ENCODE measurements at regions of chr10 and their contacts with region 1.

Region 1: DNA sequence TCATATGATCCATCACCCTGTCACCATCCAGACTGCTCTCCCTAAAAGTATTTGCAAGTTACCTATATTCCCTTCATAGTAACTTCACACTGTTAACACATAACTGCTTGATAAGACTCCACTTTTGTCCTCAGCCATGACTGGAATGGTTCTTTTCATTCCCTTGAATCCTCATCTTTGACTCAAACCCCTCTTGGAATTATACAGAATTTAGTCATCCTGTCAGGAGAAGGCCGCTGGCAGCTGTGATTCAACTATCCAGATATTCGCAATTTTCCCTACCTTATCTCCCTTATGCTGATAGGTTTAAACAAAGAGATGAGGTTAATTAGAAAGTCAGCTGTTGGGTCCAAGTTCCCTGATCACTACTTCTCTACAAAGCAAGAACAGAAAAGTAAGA is 143.0 kb upstream of the HPS1 start:
- DNase-seq: no peak
- ATAC-seq: no peak
- H3K4me3 ChIP-seq: no peak overlapping the region
- H3K27ac ChIP-seq: no peak overlapping the region
- H3K4me1 ChIP-seq: no peaks in the 10 kb centered on the region
- H3K27me3 ChIP-seq: peaks cover 25% of the 10 kb centered on the region; the same call in 1 of the 2 replicates
- CTCF ChIP-seq: no peak
- POLR2A ChIP-seq: no peak
- RAD21 ChIP-seq: no peak

Region 2: DNA sequence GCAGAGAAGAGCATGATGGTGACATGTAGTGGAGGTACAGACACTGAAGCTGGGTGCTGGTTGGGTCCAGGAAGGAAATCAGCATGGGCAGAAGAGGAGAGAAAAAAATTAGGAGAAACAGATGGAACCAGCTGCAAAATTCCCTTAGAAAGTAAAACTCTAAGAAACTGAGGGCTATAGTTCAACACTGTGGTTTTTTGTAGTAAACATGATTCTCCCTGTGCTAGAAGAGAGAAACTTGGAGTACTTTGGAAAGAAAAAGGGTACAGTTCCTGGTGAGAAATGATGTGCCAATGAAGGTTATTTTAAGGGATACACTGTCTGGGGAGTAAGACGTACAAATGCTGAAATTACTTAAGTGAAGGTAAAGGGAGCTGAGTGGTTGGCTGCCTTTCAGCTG is 38.5 kb after region 1 on chr10:
- CTCF ChIA-PET with region 1: no interaction called
- POLR2A ChIA-PET with region 1: no interaction called
- RAD21 ChIA-PET with region 1: no interaction called
- intact Hi-C with region 1: loop called (anchors 5 kb)
- DNase-seq: no peak
- ATAC-seq: no peak
- H3K4me3 ChIP-seq: no peak overlapping the region
- H3K27ac ChIP-seq: no peak overlapping the region
- H3K4me1 ChIP-seq: no peaks in the 10 kb centered on the region
- H3K27me3 ChIP-seq: 0 out of 2 replicates have a peak, but pooled peaks cover 20% of the 10 kb centered on the region
- CTCF ChIP-seq: no peak
- POLR2A ChIP-seq: no peak
- RAD21 ChIP-seq: no peak

Measured in HCT116 (cell line).